Psoas muscle (tissue), 8 donors: ENCODE measurements at regions of chr14 and their contacts with region 1.

Region 1: DNA sequence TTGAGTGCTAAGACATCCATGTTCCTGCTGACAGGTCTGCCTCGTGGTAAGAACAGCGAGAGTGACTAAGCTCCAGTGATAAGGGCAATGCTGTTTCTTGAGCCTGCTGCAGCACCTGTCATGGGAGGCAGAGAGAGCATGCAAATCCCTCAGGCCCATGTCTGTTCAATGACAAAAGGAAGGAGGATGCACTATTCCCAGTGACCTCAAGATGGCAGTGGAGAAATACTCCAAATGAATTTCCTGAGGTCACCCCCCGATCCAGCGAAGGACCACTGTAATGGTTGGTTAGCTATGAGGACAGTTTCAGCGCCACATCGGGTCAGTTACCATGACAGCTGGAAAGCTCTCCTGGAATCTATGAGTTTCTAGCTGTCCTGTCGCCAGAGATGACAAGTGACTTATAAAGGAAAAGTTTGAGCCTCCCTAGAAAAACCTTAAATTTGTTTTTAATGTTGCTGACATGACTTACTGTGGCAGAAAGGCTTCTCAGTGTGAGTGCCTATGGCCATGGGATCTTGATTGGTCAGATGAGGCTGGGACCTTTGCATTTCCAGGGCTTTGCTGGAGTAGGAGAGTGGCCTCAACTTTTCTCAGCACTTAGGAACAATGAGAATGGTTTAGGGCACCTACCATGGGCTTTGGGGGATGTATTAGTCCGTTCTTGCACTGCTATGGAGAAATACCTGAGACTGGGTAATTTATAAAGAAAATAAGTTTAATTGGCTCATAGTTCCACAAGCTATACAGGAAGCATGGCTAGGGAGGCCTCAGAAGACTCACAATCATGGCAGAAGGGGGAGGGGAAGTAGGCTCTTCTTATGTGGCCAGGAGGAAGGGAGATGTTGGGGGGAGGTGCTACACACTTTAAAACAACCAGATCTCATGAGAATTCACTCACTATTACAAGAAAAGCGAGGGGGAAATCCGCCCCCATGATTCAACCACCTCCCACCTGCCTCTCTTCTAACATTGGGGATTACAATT is 88.0 kb upstream of the TMEM260 start:
- DNase-seq: no peak
- ATAC-seq: peak; percentile 58 to 84 (median 74)
- H3K4me3 ChIP-seq: no peak overlapping the region
- H3K27ac ChIP-seq: no peak overlapping the region
- H3K4me1 ChIP-seq: peaks cover 6% of the 10 kb centered on the region
- H3K27me3 ChIP-seq: no peaks in the 10 kb centered on the region
- CTCF ChIP-seq: peak; percentile 64

Region 2: GRCh38 chr14:56452940-56453339 is 38.7 kb before region 1 on chr14:
- intact Hi-C with region 1: no loop called
- DNase-seq: no peak
- ATAC-seq: no peak
- H3K4me3 ChIP-seq: no peak overlapping the region
- H3K27ac ChIP-seq: no peak overlapping the region
- H3K4me1 ChIP-seq: no peaks in the 10 kb centered on the region
- H3K27me3 ChIP-seq: no peaks in the 10 kb centered on the region
- CTCF ChIP-seq: no peak

Region 3: DNA sequence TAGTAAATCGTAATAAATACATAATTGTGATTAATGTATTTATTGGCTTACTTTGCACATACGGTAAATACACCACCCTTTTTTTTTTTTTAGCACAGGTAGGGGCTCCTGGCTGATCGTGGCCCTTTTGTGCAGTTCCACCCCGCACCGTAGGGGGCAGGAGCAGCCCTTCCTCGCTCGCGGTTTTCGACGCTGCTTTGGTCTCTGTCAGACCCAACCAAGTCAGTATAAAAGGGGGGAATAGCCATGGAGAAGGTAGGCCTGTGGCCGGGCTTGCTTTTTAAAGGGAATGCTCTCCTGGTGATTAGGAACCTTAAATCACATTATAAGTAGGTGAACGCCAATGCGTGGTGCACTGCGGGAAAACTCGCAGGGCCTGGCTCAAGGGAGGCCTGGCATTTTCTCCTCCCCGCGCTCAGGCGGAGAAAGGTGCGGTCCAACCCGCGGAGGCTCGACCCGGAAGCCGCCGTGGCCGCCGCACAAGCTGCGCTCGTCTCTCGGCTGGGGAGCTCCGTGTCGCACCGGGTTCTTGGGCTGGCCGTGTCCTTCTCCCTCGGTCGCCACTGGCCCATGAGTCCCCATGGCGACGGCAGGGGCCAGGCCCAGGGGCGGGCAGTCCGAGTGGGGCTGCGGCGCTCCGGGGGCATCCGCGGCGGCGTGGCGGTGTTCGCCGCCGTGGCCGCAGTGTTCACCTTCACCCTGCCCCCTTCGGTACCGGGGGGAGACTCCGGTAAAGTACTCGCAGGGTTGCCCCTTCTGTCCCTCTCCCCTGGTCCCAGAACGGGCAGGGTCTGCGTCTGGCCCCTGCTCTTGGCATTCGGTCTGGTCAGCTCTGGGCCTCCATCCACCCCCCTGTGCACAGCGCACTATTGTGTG is 88.0 kb after region 1 on chr14 and contains the start of gene TMEM260:
- intact Hi-C with region 1: loop called in 1 of 2 experiments (anchors 5 kb)
- DNase-seq: peak; percentile 85 to 92
- ATAC-seq: peak; percentile 96 to 98 (median 98)
- H3K4me3 ChIP-seq: peak within 1 kb of the TSS; percentile 100
- H3K27ac ChIP-seq: peak within 1 kb of the TSS; percentile 83
- H3K4me1 ChIP-seq: peaks cover 20% of the 10 kb centered on the region
- H3K27me3 ChIP-seq: no peaks in the 10 kb centered on the region
- CTCF ChIP-seq: peak; percentile 95
- total RNA-seq, gene TMEM260: 2.7 to 7.4 (median 4.5) TPM

Region 4: GRCh38 chr14:57189070-57189469 is 697.5 kb after region 1 on chr14:
- intact Hi-C with region 1: loop called in 1 of 2 experiments (anchors 5 kb)
- DNase-seq: no peak
- ATAC-seq: no peak
- H3K4me3 ChIP-seq: no peak overlapping the region
- H3K27ac ChIP-seq: no peak overlapping the region
- H3K4me1 ChIP-seq: no peaks in the 10 kb centered on the region
- H3K27me3 ChIP-seq: peaks cover 0 to 3% (median 0%) of the 10 kb centered on the region in 3 donors
- CTCF ChIP-seq: peak; percentile 15

Region 5: GRCh38 chr14:57317316-57317715 is 825.7 kb after region 1 on chr14:
- intact Hi-C with region 1: loop called (anchors 2 to 5 kb)
- DNase-seq: peak; percentile 27 to 52
- ATAC-seq: peak; percentile 54 to 85 (median 65)
- H3K4me3 ChIP-seq: no peak overlapping the region
- H3K27ac ChIP-seq: no peak overlapping the region
- H3K4me1 ChIP-seq: no peaks in the 10 kb centered on the region
- H3K27me3 ChIP-seq: peaks cover 0 to 3% (median 0%) of the 10 kb centered on the region in 3 donors
- CTCF ChIP-seq: peak; percentile 89